ENCODE measurements at regions of chr17 and their contacts with region 1.

Region 1: DNA sequence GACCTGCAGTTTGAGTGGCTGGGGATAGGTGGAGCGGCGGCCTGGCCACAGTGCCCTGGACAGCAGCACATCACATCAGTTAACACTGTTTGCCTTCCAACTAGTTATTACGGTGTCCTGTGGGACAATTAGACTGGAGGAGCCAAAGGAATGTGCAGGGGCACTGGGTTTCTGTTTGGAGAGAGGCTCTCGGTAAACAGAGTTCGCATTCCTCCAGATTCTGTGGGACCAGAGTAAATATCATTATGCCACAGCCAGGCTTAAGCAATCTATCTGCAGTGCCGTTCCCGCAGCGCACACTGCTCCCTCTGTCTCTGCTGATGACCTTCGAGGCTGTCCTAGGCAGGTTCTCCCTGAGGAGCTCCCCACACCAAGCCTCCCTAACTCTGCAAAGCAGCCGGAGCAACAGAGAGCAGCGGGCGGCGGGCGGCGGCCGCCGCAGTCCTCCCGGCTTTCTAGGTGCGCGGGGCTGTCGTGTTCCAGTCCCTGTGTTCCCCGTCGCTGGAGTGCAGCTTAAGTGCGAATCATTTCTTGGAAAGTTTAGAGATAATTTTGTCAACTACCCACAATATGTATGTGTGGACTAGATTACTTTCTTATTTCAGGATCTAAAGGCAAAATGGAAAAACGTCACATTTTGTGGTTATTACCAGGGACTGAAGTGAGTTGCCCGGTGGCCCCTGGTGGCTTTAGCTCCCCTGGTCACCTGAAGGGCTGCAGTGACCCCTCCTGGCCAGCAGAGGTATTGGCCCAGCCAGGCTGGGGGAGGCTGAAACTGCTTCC is 43.2 kb downstream of the PGS1 start:
- DNase-seq: peak; percentile 9
- H3K4me3 ChIP-seq: no peak overlapping the region
- H3K27me3 ChIP-seq: no peaks in the 10 kb centered on the region
- CTCF ChIP-seq: peak; percentile 99

Region 2: GRCh38 chr17:78250891-78251794 is 170.5 kb before region 1 on chr17:
- CTCF ChIA-PET with region 1: interaction called, 90 read pairs
- POLR2A ChIA-PET with region 1: no interaction called
- DNase-seq: peak; percentile 16
- H3K4me3 ChIP-seq: no peak overlapping the region
- H3K27me3 ChIP-seq: no peaks in the 10 kb centered on the region; the same call in 1 of the 2 replicates
- CTCF ChIP-seq: peak; percentile 100

Region 3: DNA sequence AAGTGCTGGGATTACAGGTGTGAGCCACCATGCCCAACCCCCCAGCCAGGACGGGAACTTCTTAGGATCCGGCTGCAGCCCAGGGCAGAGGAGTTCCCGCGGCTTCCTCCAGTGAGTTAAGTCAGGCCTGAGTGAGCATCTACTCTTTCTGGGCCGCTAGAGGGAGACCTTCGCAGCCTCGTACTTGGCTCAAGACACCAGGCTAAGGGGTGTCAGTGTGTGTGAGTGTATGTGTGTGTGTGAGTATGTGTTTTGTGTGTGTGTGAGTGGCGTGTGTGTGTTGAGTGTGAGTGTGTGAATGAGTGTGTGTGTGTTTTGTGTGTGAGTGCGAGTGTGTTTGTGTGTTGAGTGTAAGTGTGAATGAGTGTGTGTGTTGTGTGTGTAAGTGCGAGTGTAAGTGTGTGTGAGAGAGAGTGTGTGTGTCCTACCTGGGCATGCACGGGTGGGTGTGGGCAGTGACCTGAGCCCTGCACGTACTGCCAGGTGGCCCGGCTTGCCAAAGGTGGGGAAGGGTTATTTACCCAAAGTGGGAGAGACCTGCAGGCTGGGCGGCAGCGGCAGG is 131.8 kb before region 1 on chr17:
- CTCF ChIA-PET with region 1: interaction called, 18 read pairs
- POLR2A ChIA-PET with region 1: no interaction called
- DNase-seq: peak; percentile 43
- H3K4me3 ChIP-seq: no peak overlapping the region
- H3K27me3 ChIP-seq: no peaks in the 10 kb centered on the region
- CTCF ChIP-seq: peak; percentile 79

Region 4: GRCh38 chr17:78390241-78391050 is 31.2 kb before region 1 on chr17:
- CTCF ChIA-PET with region 1: interaction called, 16 read pairs
- POLR2A ChIA-PET with region 1: no interaction called
- DNase-seq: peak; percentile 96
- H3K4me3 ChIP-seq: no peak overlapping the region
- H3K27me3 ChIP-seq: no peaks in the 10 kb centered on the region
- CTCF ChIP-seq: peak; percentile 19; the same call in 1 of the 2 replicates

Region 5: GRCh38 chr17:78401246-78401645 is 20.4 kb before region 1 on chr17:
- CTCF ChIA-PET with region 1: interaction called, 10 read pairs
- POLR2A ChIA-PET with region 1: no interaction called
- DNase-seq: no peak
- H3K4me3 ChIP-seq: no peak overlapping the region
- H3K27me3 ChIP-seq: no peaks in the 10 kb centered on the region
- CTCF ChIP-seq: no peak